ENCODE measurements at regions of chr12 and their contacts with region 1.

Region 1: DNA sequence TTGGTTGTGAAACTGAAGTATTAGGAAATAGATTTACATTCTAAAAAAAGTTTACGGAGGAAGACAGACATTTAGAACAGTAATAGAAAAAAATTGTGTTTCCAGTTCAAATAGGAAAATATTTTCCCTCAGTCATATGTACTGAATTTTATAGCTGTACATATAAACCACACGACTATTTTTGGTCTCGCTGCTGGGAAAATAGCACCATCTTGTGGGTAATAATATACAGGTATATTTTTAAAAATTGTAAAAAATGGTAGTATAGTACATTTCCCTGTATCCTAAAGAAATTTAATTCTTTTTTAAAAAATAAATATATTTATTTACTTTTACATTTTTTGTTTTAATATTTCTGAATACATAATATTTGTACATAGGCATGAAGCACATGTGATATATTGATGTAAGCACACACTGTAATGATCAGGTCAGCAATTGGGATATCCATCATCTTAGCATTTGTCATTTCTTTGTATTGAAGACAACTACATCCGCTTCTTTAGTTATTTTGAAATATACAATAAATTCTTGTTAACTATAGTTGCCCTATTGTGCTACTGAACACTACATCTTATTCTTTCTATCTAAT is 168.6 kb downstream of the ALX1 start:
- DNase-seq: no peak
- H3K4me3 ChIP-seq: no peak overlapping the region
- H3K27ac ChIP-seq: no peak overlapping the region
- H3K4me1 ChIP-seq: no peaks in the 10 kb centered on the region
- H3K27me3 ChIP-seq: no peaks in the 10 kb centered on the region
- CTCF ChIP-seq: no peak
- EP300 ChIP-seq: no peak
- POLR2A ChIP-seq: no peak
- RAD21 ChIP-seq: peak in 1 of 2 experiments; percentile 45; a peak in 3 of 4 replicates

Region 2: DNA sequence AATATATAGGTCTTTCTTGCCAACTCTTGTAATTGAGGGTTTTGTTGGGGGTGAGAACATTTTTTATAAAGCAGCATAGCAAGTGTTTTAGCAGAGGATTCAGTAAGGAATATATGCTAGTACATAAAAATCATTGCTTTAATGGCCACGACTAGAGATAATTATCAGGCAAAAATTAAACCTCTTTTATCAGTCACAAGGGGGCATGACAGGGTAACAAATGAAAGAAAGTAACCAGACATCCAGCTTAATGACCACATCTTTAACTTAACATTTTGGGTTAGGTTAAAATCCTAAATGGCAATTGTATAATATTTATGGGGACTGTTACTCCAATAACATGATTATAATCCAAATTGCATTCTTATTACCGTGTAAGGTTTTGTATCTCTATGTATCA is 292.9 kb before region 1 on chr12:
- CTCF ChIA-PET with region 1: interaction called, 11 read pairs
- POLR2A ChIA-PET with region 1: no interaction called
- DNase-seq: no peak
- H3K4me3 ChIP-seq: no peak overlapping the region
- H3K27ac ChIP-seq: no peak overlapping the region
- H3K4me1 ChIP-seq: no peaks in the 10 kb centered on the region
- H3K27me3 ChIP-seq: no peaks in the 10 kb centered on the region
- CTCF ChIP-seq: peak in 2 of 3 experiments; percentile 36 to 42; a peak in 2 of 4 replicates
- EP300 ChIP-seq: no peak
- POLR2A ChIP-seq: no peak
- RAD21 ChIP-seq: peak; percentile 72 to 76

Region 3: DNA sequence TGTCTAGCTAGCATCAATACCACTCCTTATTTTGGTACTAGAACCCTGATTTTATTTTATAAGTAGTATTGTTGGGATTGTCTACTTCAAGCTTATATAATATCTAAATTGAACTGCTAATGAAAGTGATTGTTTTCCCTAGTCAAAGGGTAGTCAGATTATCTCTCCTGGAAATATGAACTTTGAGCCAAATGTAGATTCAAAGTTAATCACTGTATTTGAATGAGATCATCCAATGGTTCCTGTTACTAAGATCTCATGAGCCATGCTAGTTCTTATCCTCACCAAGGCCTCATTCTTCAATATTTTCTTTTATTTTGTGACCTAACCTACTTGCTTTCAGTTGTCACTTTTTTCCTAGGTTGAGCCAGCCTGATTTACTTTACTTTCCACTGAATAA is 110.9 kb after region 1 on chr12:
- CTCF ChIA-PET with region 1: no interaction called
- POLR2A ChIA-PET with region 1: no interaction called
- DNase-seq: no peak
- H3K4me3 ChIP-seq: no peak overlapping the region
- H3K27ac ChIP-seq: no peak overlapping the region
- H3K4me1 ChIP-seq: no peaks in the 10 kb centered on the region
- H3K27me3 ChIP-seq: no peaks in the 10 kb centered on the region
- CTCF ChIP-seq: no peak
- EP300 ChIP-seq: no peak
- POLR2A ChIP-seq: no peak
- RAD21 ChIP-seq: no peak

Measured in H1 (cell line).